A673 (cell line): ENCODE measurements at regions of chr12 and their contacts with region 1.

Region 1: GRCh38 chr12:98373025-98373554 is 142.3 kb upstream of the TMPO start:
- DNase-seq: peak; percentile 89
- H3K4me3 ChIP-seq: no peak overlapping the region
- H3K27ac ChIP-seq: no peak overlapping the region
- H3K4me1 ChIP-seq: peaks cover 47% of the 10 kb centered on the region
- H3K27me3 ChIP-seq: no peaks in the 10 kb centered on the region
- CTCF ChIP-seq: peak; percentile 79

Region 2: DNA sequence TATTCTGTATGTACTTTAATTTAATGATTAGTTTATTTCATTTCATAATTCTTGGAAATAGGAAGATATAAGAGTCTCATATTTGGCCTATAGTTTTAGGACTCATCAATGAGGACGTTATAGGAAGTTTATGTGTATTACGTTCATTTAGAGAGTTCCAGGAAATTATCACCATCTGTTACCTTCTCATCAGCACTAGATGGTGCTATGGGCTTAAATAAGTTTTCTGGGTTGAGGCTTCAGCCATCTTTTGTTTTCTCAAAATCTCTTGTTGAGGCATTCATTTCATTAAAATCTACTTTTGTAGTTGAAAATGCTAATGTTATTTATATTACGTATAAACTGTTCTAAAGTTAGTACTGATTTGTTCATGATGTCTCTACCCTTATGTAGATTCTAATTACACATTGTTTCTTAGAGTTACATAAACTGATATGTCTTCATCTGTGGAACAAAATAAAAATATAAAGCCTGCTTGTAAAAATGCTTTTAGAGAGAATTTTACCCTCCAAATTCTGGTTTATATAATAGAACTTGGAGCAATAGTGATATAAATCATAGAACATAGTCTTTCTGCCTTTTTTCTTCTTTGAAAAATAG is 1794.5 kb before region 1 on chr12:
- CTCF ChIA-PET with region 1: no interaction called
- POLR2A ChIA-PET with region 1: no interaction called
- intact Hi-C with region 1: loop called (anchors 2 kb)
- DNase-seq: peak; percentile 75
- H3K4me3 ChIP-seq: no peak overlapping the region
- H3K27ac ChIP-seq: no peak overlapping the region
- H3K4me1 ChIP-seq: no peaks in the 10 kb centered on the region
- H3K27me3 ChIP-seq: peaks cover 4% of the 10 kb centered on the region
- CTCF ChIP-seq: peak; percentile 72

Region 3: DNA sequence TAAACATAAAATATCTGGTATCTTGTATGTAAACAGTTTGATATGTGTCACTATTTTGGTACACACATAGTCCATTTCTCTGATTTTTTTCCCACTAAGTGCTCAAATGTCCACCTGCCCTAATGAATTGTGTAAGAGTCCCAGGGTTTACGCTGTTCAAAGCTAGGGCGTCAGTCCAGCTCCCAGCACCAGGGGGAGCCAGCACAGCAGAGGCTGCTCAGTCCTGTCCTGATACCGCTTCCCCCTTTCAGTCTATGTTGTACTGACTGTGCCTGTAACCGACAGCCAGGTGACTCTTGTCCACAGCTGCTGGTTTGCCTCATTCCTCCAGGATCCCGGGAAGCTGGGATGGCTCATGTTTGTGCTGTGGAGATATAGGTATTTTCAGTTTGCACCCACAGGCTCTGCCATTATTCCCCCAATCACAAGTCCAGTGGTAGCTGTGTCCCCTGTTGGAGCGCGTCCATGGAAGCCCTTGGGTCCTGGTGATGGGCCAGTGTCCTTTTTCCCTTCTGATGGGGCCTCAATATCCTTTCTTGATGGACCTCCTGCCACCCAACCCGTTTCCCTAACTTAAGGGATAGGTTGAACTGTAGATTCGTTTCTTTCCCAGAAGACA is 1224.0 kb before region 1 on chr12:
- CTCF ChIA-PET with region 1: no interaction called
- POLR2A ChIA-PET with region 1: no interaction called
- intact Hi-C with region 1: loop called (anchors 2 kb)
- DNase-seq: peak; percentile 64
- H3K4me3 ChIP-seq: no peak overlapping the region
- H3K27ac ChIP-seq: no peak overlapping the region
- H3K4me1 ChIP-seq: no peaks in the 10 kb centered on the region
- H3K27me3 ChIP-seq: peaks cover 75% of the 10 kb centered on the region
- CTCF ChIP-seq: peak; percentile 83

Region 4: DNA sequence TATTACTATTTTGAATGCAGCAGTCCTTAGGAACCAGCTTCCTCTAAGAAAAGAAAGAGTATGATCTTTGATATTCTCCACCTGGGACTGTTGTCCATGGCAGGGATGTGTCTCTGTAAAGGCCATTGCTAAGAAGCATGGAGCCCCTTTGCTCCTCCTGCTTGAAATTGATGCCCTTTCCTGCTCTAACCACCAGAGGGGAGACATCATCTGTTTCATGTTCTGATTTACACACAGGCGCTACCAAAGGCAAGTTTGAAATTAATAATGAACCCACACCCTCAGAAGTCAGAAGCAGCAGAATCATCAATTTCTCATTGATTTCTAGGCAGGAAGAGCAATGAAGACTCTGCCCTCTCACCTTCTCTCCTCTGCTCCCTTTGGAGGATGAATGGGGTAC is 656.7 kb before region 1 on chr12:
- CTCF ChIA-PET with region 1: no interaction called
- POLR2A ChIA-PET with region 1: no interaction called
- intact Hi-C with region 1: loop called (anchors 10 kb)
- DNase-seq: peak; percentile 22
- H3K4me3 ChIP-seq: no peak overlapping the region
- H3K27ac ChIP-seq: no peak overlapping the region
- H3K4me1 ChIP-seq: no peaks in the 10 kb centered on the region
- H3K27me3 ChIP-seq: peaks cover 17% of the 10 kb centered on the region
- CTCF ChIP-seq: peak; percentile 43

Region 5: GRCh38 chr12:98002712-98003493 is 370.2 kb before region 1 on chr12:
- CTCF ChIA-PET with region 1: no interaction called
- POLR2A ChIA-PET with region 1: no interaction called
- intact Hi-C with region 1: loop called (anchors 5 kb)
- DNase-seq: peak; percentile 81
- H3K4me3 ChIP-seq: no peak overlapping the region
- H3K27ac ChIP-seq: no peak overlapping the region
- H3K4me1 ChIP-seq: peaks cover 9% of the 10 kb centered on the region
- H3K27me3 ChIP-seq: no peaks in the 10 kb centered on the region
- CTCF ChIP-seq: peak; percentile 72

Region 6: GRCh38 chr12:98227162-98227561 is 145.9 kb before region 1 on chr12:
- CTCF ChIA-PET with region 1: interaction called, 7 read pairs
- POLR2A ChIA-PET with region 1: no interaction called
- intact Hi-C with region 1: loop called (anchors 1 kb)
- DNase-seq: peak; percentile 53
- H3K4me3 ChIP-seq: no peak overlapping the region
- H3K27ac ChIP-seq: no peak overlapping the region
- H3K4me1 ChIP-seq: peaks cover 8% of the 10 kb centered on the region
- H3K27me3 ChIP-seq: no peaks in the 10 kb centered on the region
- CTCF ChIP-seq: peak; percentile 67

Region 7: DNA sequence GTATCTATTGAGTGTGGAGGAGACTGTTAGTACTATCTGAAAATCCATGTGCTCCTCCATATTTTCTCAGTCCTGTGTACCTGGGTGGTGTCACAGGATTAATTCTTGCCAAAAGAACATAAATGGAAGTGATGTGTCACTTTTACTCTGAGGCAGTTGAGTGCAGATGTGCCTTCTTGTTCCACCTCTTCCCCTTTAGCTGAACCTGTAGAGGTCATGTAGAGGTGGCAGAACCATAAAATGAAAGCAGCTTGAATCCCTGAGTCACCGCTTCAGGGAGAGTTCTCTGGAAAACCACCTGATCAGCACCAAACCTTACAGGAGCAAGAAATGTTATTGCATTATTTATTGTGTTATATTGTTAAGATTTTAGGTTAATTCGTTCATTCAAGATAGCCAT is 205.7 kb after region 1 on chr12:
- CTCF ChIA-PET with region 1: no interaction called
- POLR2A ChIA-PET with region 1: no interaction called
- intact Hi-C with region 1: no loop called
- DNase-seq: no peak
- H3K4me3 ChIP-seq: no peak overlapping the region
- H3K27ac ChIP-seq: no peak overlapping the region
- H3K4me1 ChIP-seq: no peaks in the 10 kb centered on the region
- H3K27me3 ChIP-seq: no peaks in the 10 kb centered on the region
- CTCF ChIP-seq: no peak

Region 8: DNA sequence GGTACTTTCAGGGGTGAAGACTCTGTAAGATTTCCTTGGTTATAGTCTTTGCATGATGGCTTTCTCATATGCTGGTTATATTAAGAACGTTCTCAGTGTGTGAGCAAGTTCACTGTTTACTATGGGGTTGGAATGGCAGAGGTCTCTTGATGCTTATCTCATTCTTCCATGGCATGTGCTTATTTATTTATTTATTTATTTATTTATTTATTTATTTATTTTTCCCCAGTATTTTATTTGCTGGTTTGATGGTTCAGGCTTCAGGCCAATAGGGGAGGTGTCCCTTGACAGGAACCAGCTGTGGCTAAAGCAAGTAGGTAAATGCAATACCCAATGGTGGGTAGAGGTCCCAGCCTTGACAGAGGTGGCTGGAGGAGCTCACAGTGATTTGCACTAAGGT is 1113.2 kb after region 1 on chr12:
- CTCF ChIA-PET with region 1: no interaction called
- POLR2A ChIA-PET with region 1: no interaction called
- intact Hi-C with region 1: no loop called
- DNase-seq: no peak
- H3K4me3 ChIP-seq: no peak overlapping the region
- H3K27ac ChIP-seq: no peak overlapping the region
- H3K4me1 ChIP-seq: no peaks in the 10 kb centered on the region
- H3K27me3 ChIP-seq: no peaks in the 10 kb centered on the region
- CTCF ChIP-seq: no peak